T-cell (primary cell): ENCODE measurements at regions of chr1 and their contacts with region 1.

Region 1: DNA sequence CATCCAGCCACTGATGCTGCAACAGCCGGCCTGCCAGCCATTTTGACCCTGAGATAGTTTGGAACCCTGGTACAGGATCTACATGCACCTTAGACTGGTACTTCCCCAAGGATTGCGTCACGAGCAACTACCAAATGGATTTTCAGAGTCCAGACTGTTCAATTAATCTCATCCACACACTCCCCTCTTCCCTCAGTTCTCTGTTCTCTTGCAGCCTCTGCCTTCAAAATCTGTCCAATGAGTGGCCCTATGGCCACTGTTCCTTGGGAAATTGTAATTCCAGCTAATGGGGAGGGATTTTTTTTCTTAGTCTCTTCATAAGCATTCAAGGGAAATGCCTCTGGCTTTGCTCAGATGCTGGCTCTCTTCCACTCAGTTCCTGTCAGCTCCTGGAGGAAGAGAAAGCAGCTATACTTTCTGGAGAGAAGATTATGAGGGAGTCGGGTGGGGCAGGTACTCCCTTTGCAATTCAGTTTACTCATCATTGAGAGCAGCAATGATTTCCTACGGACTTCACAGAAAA is 19.8 kb upstream of the UAP1 start:
- DNase-seq: no peak
- ATAC-seq: no peak
- H3K4me3 ChIP-seq: no peak overlapping the region
- H3K4me3 Mint-ChIP-seq: no peak overlapping the region
- H3K27ac ChIP-seq: no peak overlapping the region
- H3K27ac Mint-ChIP-seq: no peak overlapping the region
- H3K4me1 ChIP-seq: no peaks in the 10 kb centered on the region
- H3K4me1 Mint-ChIP-seq: no peaks in the 10 kb centered on the region
- H3K27me3 ChIP-seq: peaks cover 0 to 2% of the 10 kb centered on the region in 2 experiments
- H3K27me3 Mint-ChIP-seq: no peaks in the 10 kb centered on the region

Region 2: GRCh38 chr1:162357681-162358266 is 183.9 kb before region 1 on chr1:
- CTCF ChIA-PET with region 1: no interaction called
- POLR2A ChIA-PET with region 1: interaction called in 1 of 2 experiments, 12 read pairs
- DNase-seq: peak in 1 of 35 experiments; percentile 12
- ATAC-seq: no peak
- H3K4me3 ChIP-seq: no peak overlapping the region
- H3K4me3 Mint-ChIP-seq: no peak overlapping the region
- H3K27ac ChIP-seq: no peak overlapping the region
- H3K27ac Mint-ChIP-seq: no peak overlapping the region
- H3K4me1 ChIP-seq: no peaks in the 10 kb centered on the region
- H3K4me1 Mint-ChIP-seq: no peaks in the 10 kb centered on the region
- H3K27me3 ChIP-seq: peaks cover 0 to 3% of the 10 kb centered on the region in 2 experiments
- H3K27me3 Mint-ChIP-seq: peaks cover 13 to 15% of the 10 kb centered on the region in 2 donors

Region 3: GRCh38 chr1:162561037-162561616 is 19.4 kb after region 1 on chr1:
- CTCF ChIA-PET with region 1: no interaction called
- POLR2A ChIA-PET with region 1: no interaction called
- DNase-seq: peak; percentile 94 to 99 (median 97)
- ATAC-seq: peak; percentile 90 to 97 (median 94)
- H3K4me3 ChIP-seq: peak overlapping the region; percentile 82 to 83
- H3K4me3 Mint-ChIP-seq: peak overlapping the region; percentile 93 to 96 (median 95)
- H3K27ac ChIP-seq: peak overlapping the region; percentile 89
- H3K27ac Mint-ChIP-seq: peak overlapping the region; percentile 95 to 98
- H3K4me1 ChIP-seq: peaks cover 11 to 15% of the 10 kb centered on the region in 2 experiments
- H3K4me1 Mint-ChIP-seq: peaks cover 36 to 44% (median 38%) of the 10 kb centered on the region in 3 donors
- H3K27me3 ChIP-seq: peaks cover 0 to 3% of the 10 kb centered on the region in 2 experiments
- H3K27me3 Mint-ChIP-seq: peaks cover 0 to 5% of the 10 kb centered on the region in 2 donors